Activated CD4-positive, alpha-beta T cell treated with anti-CD3 and anti-CD28 coated beads, Interleukin-2, amount 10 ng/mL, durations not matched to agents 24 days and 14 days (primary cell): ENCODE measurements at regions of chr10 and their contacts with region 1.

Region 1: DNA sequence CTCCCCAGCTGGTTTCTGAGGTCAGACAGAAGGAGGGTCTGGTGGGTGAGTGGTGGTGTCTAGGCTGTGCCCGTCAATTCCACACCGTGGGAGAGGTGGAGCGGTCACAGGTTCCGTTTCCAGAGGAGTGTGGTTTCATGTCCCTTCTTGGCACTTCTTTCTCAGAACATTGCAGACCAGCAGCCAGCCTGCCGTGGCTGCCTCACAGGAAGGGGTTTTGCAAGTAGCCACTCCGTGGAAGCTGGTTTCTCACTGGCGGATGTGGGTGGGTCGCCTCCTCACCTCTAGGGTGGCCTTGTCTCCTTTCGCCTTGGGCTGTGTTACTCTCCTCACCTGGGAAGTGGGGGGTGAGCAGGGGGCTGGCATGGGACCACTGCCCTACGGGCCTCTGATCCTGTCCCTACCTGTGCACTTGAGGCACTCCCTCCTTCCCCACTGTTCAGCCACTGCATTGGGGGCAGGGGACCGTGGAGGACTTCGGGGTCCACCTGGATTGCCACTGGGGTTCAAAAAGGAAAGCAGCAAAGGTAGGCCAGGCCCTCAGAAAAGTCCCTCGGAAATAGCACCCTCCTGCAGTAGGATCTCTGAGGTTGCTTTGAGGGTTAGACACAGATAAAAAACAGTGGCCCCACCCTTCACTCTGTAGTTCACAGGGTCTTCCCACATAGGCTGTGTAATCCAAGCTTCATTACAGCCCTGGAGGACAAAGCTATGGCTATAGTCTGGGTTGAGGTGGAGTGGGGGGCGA is 33.9 kb downstream of the TSPAN14 start:
- DNase-seq: peak; percentile 90
- H3K4me3 Mint-ChIP-seq: peak overlapping the region; percentile 77
- H3K27ac Mint-ChIP-seq: peak overlapping the region; percentile 92
- H3K4me1 Mint-ChIP-seq: peaks cover 88% of the 10 kb centered on the region
- H3K27me3 Mint-ChIP-seq: no peaks in the 10 kb centered on the region

Region 2: GRCh38 chr10:80055760-80056159 is 432.2 kb before region 1 on chr10:
- intact Hi-C with region 1: no loop called
- DNase-seq: no peak
- H3K4me3 Mint-ChIP-seq: no peak overlapping the region
- H3K27ac Mint-ChIP-seq: no peak overlapping the region
- H3K4me1 Mint-ChIP-seq: peaks cover 3% of the 10 kb centered on the region
- H3K27me3 Mint-ChIP-seq: peaks cover 2% of the 10 kb centered on the region

Region 3: GRCh38 chr10:80453701-80454513 is 34.1 kb before region 1 on chr10 and contains the start of gene TSPAN14:
- intact Hi-C with region 1: loop called (anchors 1 kb)
- DNase-seq: peak; percentile 94
- H3K4me3 Mint-ChIP-seq: peak within 1 kb of the TSS; percentile 98
- H3K27ac Mint-ChIP-seq: peak within 1 kb of the TSS; percentile 88
- H3K4me1 Mint-ChIP-seq: peaks cover 41% of the 10 kb centered on the region
- H3K27me3 Mint-ChIP-seq: no peaks in the 10 kb centered on the region
- total RNA-seq, gene TSPAN14: 57.8 and 61.7 TPM in 2 replicates

Region 4: DNA sequence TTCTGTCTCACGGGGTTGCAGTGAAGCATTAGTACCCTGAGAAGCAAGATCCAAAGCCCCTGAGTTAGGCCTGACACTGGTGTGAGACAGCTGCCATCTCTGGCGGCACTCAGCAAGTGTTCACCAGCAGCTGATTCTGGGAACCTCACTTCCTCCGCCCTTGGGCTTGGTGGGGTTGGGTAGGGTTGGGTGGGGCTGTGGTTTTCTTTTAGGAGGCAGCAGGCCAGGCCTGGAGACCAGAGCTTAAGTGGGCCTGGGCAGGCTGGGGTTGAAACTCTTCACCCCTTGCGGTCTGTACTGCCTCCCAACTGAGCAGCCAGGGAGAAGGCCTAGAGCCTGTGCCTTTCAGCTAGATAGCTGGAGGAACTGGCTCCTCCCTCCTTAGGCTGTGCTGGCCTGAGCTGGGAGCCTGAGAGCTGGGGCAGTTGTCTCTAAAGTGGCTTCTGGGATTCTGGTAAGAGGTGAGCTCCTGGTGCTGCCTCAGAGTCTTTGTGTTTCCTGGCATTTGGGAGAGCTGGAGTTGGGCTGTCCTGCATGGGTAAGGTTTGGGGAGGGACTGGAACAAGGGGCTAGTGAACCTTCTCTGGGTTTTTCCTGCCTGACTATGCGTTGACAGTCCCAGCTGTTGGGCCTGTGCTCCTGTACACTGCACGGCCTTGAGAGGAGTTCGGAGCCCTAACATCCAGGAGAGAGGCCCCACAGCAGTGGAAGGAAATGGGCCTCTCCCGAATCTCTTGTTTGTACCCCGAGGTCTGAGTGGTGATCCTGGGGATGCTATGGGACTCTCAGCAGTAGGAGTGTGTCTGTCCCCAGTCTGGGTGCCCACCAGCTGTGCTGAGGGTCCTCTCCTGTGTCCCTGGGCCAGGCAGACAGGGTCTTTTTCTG is 28.7 kb before region 1 on chr10:
- intact Hi-C with region 1: loop called (anchors 1 kb)
- DNase-seq: peak; percentile 91
- H3K4me3 Mint-ChIP-seq: peak overlapping the region; percentile 98
- H3K27ac Mint-ChIP-seq: peak overlapping the region; percentile 88
- H3K4me1 Mint-ChIP-seq: peaks cover 84% of the 10 kb centered on the region
- H3K27me3 Mint-ChIP-seq: no peaks in the 10 kb centered on the region

Region 5: GRCh38 chr10:80498833-80499741 is 11.1 kb after region 1 on chr10:
- intact Hi-C with region 1: loop called (anchors 1 kb)
- DNase-seq: peak; percentile 82
- H3K4me3 Mint-ChIP-seq: peak overlapping the region; percentile 75
- H3K27ac Mint-ChIP-seq: peak overlapping the region; percentile 95
- H3K4me1 Mint-ChIP-seq: peaks cover 83% of the 10 kb centered on the region
- H3K27me3 Mint-ChIP-seq: no peaks in the 10 kb centered on the region

Region 6: DNA sequence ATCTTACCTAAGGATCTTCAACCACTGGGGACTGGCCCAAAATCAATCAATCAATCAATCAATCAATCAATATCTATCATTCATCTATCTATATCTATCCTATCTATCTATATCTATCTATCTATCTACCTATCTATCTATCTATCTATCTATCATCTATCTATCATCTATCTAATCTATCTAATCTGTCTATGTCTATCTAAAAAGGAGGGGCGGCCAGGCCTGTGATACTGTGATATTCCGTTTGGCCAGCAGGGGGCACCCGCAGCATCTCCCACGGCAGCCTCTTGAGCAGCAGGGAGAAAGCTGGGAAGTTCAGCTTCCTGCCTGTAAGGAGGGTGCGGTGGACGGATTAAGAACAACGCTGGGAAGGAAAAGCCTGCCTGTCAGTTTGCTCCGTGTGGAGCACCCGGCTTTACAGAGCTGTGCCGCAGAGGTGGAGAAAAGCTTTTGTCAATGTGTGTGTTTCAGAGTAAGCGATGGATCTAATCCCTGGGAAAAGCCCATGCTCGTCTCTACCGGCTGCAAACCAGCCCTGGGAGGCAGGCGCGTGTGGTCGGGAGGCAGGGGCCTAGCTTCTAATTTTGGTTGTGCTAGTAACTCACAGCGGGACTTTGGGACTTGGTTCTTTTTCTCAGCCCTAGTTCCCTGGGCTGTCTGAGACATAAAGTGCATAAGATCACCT is 174.8 kb after region 1 on chr10:
- intact Hi-C with region 1: no loop called
- DNase-seq: peak; percentile 89
- H3K4me3 Mint-ChIP-seq: peak overlapping the region; percentile 7
- H3K27ac Mint-ChIP-seq: no peak overlapping the region
- H3K4me1 Mint-ChIP-seq: peaks cover 3% of the 10 kb centered on the region
- H3K27me3 Mint-ChIP-seq: peaks cover 12% of the 10 kb centered on the region